Activated CD4-positive, alpha-beta memory T cell treated with anti-CD3 and anti-CD28 coated beads, Interleukin-2, amount 10 ng/mL, durations not matched to agents 7 days and 5 days (primary cell): ENCODE measurements at regions of chr11 and their contacts with region 1.

Region 1: GRCh38 chr11:118198370-118198769 is 21.9 kb upstream of the SCN2B start:
- DNase-seq: peak; percentile 85
- H3K4me3 Mint-ChIP-seq: no peak overlapping the region
- H3K27ac Mint-ChIP-seq: peak overlapping the region; percentile 63
- H3K4me1 Mint-ChIP-seq: peaks cover 15% of the 10 kb centered on the region
- H3K27me3 Mint-ChIP-seq: no peaks in the 10 kb centered on the region

Region 2: DNA sequence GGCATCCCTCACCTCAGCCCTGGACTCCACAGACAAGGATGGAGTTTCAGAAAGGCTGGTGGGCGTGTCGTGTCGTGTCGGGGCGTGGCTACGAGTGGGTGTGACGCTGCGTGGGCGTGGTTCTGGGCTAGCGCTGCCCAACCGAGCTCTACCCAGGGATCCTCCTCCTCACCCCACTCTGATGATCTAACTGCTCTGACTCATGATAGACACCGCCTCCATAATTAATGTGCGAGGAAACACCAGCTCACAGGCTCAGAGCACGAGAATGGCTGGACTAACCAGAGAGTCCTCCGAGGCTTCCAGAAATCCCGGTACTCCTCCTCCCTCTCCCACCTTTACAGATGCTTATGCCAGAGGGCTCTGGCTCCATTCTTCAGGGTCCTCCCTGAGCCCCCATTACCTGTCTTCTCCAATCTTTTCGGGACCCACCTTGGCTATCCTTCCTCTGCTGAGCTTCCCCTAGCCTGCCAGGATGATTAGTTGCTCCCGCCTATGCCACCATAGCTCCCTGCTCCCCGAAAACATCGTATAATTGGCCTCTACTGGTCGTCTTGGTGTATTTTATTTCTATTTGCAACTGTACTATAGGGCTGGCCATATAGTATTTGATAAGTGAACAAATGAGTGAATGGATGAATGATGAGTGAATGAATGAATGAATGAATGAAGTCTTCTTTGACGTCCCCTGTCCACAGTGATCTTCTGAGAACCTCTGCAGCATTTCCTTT is 291.0 kb before region 1 on chr11:
- CTCF ChIA-PET with region 1: no interaction called
- POLR2A ChIA-PET with region 1: no interaction called
- DNase-seq: peak; percentile 82
- H3K4me3 Mint-ChIP-seq: peak overlapping the region; percentile 48
- H3K27ac Mint-ChIP-seq: peak overlapping the region; percentile 50
- H3K4me1 Mint-ChIP-seq: peaks cover 12% of the 10 kb centered on the region
- H3K27me3 Mint-ChIP-seq: peaks cover under 1% of the 10 kb centered on the region

Region 3: GRCh38 chr11:118164885-118165284 is 33.5 kb before region 1 on chr11:
- CTCF ChIA-PET with region 1: no interaction called
- POLR2A ChIA-PET with region 1: no interaction called
- DNase-seq: no peak
- H3K4me3 Mint-ChIP-seq: no peak overlapping the region
- H3K27ac Mint-ChIP-seq: no peak overlapping the region
- H3K4me1 Mint-ChIP-seq: no peaks in the 10 kb centered on the region
- H3K27me3 Mint-ChIP-seq: peaks cover 39% of the 10 kb centered on the region

Region 4: DNA sequence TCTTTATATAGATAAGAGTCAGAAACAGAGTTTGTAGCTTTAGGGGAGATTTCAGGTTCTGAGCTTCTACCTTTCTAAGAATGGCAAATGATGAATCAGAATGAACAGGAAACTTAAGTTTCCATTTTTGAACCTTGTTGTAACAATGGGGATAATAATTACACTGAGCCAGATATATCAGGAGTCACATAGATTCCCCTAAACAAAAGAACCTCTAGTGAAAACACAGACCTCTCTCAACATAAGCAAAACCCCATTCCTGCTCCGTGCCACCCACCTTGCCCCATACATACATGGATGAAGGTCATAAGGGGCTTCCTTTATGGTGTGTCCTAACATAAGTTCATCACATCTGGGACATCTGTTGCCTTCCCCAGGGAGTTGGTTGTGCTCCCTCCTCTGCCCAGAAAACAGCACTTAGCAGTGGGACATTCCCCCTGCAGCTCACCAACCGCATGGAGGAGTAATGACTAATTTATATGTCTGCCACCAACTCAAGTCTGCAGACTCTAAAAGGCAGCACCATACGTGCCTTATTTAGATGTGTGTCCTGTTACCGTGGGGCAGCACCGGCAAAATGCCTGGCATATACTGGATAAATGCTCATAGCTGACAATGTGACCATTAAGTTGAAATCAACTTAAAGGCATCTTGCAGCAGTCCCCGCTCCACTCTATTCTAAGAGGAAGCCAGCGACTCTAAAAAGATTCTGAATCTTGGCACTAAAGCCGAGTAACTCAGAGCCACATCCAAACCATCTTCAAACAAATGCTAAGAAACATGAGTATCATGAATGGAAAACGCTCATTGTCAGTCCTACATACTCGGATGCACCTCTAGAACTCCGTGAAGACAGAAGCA is 18.5 kb after region 1 on chr11:
- CTCF ChIA-PET with region 1: interaction called, 47 read pairs
- POLR2A ChIA-PET with region 1: interaction called, 249 read pairs
- DNase-seq: peak; percentile 57
- H3K4me3 Mint-ChIP-seq: peak overlapping the region; percentile 74
- H3K27ac Mint-ChIP-seq: peak overlapping the region; percentile 94
- H3K4me1 Mint-ChIP-seq: peaks cover 96% of the 10 kb centered on the region
- H3K27me3 Mint-ChIP-seq: no peaks in the 10 kb centered on the region

Region 5: DNA sequence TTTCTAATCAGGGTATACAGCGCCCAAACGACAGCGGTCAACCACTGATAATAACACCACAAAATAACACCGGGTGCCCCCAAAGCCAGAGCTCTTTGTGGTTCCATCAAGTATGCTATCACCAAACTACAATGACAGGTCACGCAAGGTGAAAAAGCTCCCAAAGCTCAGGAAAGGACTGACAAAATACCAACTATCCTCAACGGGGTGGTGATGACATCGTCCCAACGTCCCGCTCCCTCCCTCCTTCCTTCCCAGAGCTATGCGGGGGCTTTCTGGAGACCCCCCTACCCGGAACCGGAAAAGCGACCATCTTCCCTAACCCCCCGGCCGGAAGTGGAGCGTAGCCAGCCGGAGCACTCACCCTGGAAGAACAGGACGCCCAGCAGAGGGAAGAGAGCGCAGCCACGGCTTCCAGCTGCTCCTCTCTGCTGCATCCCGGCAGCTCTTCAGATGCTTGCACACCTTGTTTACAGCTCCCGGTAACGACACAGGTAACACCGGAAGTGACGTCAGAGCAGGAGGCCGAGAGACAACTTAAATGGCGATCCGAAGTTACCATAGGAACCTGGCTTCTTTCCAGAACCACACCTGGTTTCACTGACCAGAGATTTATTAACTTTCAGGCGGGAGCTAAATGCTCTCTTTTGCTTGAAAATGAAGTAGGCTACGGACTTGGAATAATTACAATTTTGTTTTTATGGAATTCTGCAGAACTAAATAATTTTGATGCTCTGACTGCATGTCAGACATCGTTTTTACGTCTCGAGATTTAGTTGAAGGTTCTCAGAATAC is 53.7 kb after region 1 on chr11 and contains the start of gene MPZL3:
- CTCF ChIA-PET with region 1: interaction called, 34 read pairs
- POLR2A ChIA-PET with region 1: interaction called, 30 read pairs
- DNase-seq: peak; percentile 82
- H3K4me3 Mint-ChIP-seq: peak within 1 kb of the TSS; percentile 93
- H3K27ac Mint-ChIP-seq: peak within 1 kb of the TSS; percentile 93
- H3K4me1 Mint-ChIP-seq: peaks cover 44% of the 10 kb centered on the region
- H3K27me3 Mint-ChIP-seq: no peaks in the 10 kb centered on the region
- total RNA-seq, gene MPZL3: 34.0 to 34.9 TPM

Region 6: DNA sequence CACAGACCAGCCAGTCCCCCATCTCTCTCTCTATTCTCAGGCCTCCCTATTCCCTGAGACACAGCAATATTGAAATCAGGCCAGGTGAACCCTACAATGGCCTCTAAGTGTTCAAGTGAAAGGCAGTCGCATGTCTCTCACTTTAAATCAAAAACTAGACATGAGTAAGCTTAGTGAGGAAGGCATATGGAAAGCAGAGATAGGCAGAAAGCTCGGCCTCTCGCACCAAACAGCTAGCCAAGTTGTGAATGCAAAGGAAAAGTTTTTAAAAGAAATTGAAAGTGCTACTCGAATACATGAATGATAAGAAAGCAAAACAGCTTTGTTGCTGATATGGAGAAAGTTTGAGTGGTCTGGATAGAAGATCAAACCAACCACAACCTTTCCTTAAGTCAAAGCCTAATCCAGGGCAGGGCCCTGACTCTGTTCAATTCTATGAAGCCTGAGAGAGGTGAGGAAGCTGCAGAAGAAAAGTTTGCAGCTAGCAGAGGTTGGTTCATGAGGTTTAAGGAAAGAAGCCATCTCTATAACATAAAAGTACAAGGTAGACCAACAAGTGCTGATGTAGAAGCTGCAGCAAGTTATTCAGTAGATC is 85.5 kb after region 1 on chr11:
- CTCF ChIA-PET with region 1: interaction called, 62 read pairs
- POLR2A ChIA-PET with region 1: interaction called, 3 read pairs
- DNase-seq: no peak
- H3K4me3 Mint-ChIP-seq: no peak overlapping the region
- H3K27ac Mint-ChIP-seq: no peak overlapping the region
- H3K4me1 Mint-ChIP-seq: peaks cover 26% of the 10 kb centered on the region
- H3K27me3 Mint-ChIP-seq: no peaks in the 10 kb centered on the region

Region 7: GRCh38 chr11:118314988-118315411 is 116.6 kb after region 1 on chr11:
- CTCF ChIA-PET with region 1: interaction called, 14 read pairs
- POLR2A ChIA-PET with region 1: no interaction called
- DNase-seq: no peak
- H3K4me3 Mint-ChIP-seq: peak overlapping the region; percentile 54
- H3K27ac Mint-ChIP-seq: peak overlapping the region; percentile 97
- H3K4me1 Mint-ChIP-seq: peaks cover 85% of the 10 kb centered on the region
- H3K27me3 Mint-ChIP-seq: no peaks in the 10 kb centered on the region

Region 8: DNA sequence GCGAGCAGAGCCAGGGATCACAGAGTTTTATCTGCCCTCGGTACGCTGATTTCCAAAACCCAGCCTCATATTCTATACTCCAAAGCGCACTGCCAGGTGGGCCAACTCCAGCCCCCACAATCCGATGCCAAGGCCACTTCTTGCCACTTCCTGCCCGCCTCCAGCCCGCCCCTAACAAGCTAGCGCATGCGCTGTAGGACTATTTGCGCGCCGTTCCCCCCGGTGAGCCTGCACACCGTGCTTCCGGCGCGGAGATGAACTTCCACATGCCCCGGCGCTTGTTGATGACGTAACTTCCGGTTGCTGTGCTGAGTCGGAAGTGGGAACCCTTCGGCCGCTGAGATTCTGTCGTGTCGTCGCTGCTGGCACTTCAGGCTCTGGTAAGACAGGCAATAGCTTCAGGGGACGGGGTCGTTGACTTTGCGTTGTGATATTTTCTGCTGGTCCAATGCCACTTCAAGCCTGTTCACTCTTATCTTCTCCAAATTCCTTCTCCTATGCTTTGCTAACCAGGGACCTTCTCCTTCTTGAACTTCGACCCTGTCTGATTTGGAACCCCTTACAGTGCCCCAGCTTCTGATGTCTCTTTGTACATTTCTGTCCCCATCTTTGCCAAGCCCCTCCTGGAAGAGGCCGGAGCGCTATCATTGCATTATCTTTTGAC is 161.1 kb after region 1 on chr11 and contains the start of gene UBE4A:
- CTCF ChIA-PET with region 1: interaction called, 25 read pairs
- POLR2A ChIA-PET with region 1: no interaction called
- DNase-seq: peak; percentile 98
- H3K4me3 Mint-ChIP-seq: peak within 1 kb of the TSS; percentile 92
- H3K27ac Mint-ChIP-seq: peak within 1 kb of the TSS; percentile 83
- H3K4me1 Mint-ChIP-seq: peaks cover 45% of the 10 kb centered on the region
- H3K27me3 Mint-ChIP-seq: no peaks in the 10 kb centered on the region
- total RNA-seq, gene UBE4A: 42.1 to 44.1 TPM